CD4-positive, alpha-beta memory T cell (primary cell): ENCODE measurements at regions of chr9 and their contacts with region 1.

Region 1: GRCh38 chr9:70602321-70603019 is 188.0 kb upstream of the KLF9 start:
- DNase-seq: peak in 4 of 5 donors; percentile 43 to 60 (median 47)
- H3K4me3 ChIP-seq: no peak overlapping the region
- H3K4me3 Mint-ChIP-seq: no peak overlapping the region
- H3K27ac ChIP-seq: no peak overlapping the region
- H3K27ac Mint-ChIP-seq: peak overlapping the region in 1 of 7 donors; percentile 49
- H3K4me1 ChIP-seq: no peaks in the 10 kb centered on the region
- H3K4me1 Mint-ChIP-seq: no peaks in the 10 kb centered on the region
- H3K27me3 ChIP-seq: no peaks in the 10 kb centered on the region
- H3K27me3 Mint-ChIP-seq: peaks cover 0 to 1% of the 10 kb centered on the region in 2 donors

Region 2: GRCh38 chr9:69971643-69972449 is 630.6 kb before region 1 on chr9:
- CTCF ChIA-PET with region 1: interaction called, 33 read pairs
- POLR2A ChIA-PET with region 1: no interaction called
- intact Hi-C with region 1: no loop called
- DNase-seq: peak in 4 of 5 donors; percentile 20 to 30 (median 23)
- H3K4me3 ChIP-seq: no peak overlapping the region
- H3K4me3 Mint-ChIP-seq: no peak overlapping the region
- H3K27ac ChIP-seq: no peak overlapping the region
- H3K27ac Mint-ChIP-seq: peak overlapping the region in 1 of 7 donors; percentile 29
- H3K4me1 ChIP-seq: no peaks in the 10 kb centered on the region
- H3K4me1 Mint-ChIP-seq: peaks cover 0 to 4% (median 0%) of the 10 kb centered on the region in 4 donors
- H3K27me3 ChIP-seq: no peaks in the 10 kb centered on the region
- H3K27me3 Mint-ChIP-seq: peaks cover 4 to 11% of the 10 kb centered on the region in 2 donors

Region 3: GRCh38 chr9:70258692-70259511 is 343.6 kb before region 1 on chr9 and contains the start of gene SMC5:
- CTCF ChIA-PET with region 1: no interaction called
- POLR2A ChIA-PET with region 1: no interaction called
- intact Hi-C with region 1: loop called (anchors 10 kb)
- DNase-seq: peak; percentile 85 to 93 (median 92)
- H3K4me3 ChIP-seq: peak within 1 kb of the TSS; percentile 62 to 66
- H3K4me3 Mint-ChIP-seq: peak within 1 kb of the TSS; percentile 89 to 99 (median 96)
- H3K27ac ChIP-seq: peak within 1 kb of the TSS; percentile 95
- H3K27ac Mint-ChIP-seq: peak within 1 kb of the TSS; percentile 91 to 99 (median 97)
- H3K4me1 ChIP-seq: peaks cover 55% of the 10 kb centered on the region
- H3K4me1 Mint-ChIP-seq: peaks cover 44 to 65% (median 51%) of the 10 kb centered on the region in 4 donors
- H3K27me3 ChIP-seq: no peaks in the 10 kb centered on the region
- H3K27me3 Mint-ChIP-seq: no peaks in the 10 kb centered on the region
- total RNA-seq, gene SMC5: 43.7 to 48.3 TPM

Region 4: GRCh38 chr9:70352802-70353201 is 249.7 kb before region 1 on chr9:
- CTCF ChIA-PET with region 1: interaction called, 47 read pairs
- POLR2A ChIA-PET with region 1: interaction called, 5 read pairs
- intact Hi-C with region 1: loop called (anchors 1 kb)
- DNase-seq: peak in 4 of 5 donors; percentile 14 to 31 (median 24)
- H3K4me3 ChIP-seq: no peak overlapping the region
- H3K4me3 Mint-ChIP-seq: no peak overlapping the region
- H3K27ac ChIP-seq: no peak overlapping the region
- H3K27ac Mint-ChIP-seq: peak overlapping the region in 1 of 7 donors; percentile 11
- H3K4me1 ChIP-seq: no peaks in the 10 kb centered on the region
- H3K4me1 Mint-ChIP-seq: peaks cover 0 to 2% (median under 1%) of the 10 kb centered on the region in 4 donors
- H3K27me3 ChIP-seq: no peaks in the 10 kb centered on the region
- H3K27me3 Mint-ChIP-seq: no peaks in the 10 kb centered on the region

Region 5: DNA sequence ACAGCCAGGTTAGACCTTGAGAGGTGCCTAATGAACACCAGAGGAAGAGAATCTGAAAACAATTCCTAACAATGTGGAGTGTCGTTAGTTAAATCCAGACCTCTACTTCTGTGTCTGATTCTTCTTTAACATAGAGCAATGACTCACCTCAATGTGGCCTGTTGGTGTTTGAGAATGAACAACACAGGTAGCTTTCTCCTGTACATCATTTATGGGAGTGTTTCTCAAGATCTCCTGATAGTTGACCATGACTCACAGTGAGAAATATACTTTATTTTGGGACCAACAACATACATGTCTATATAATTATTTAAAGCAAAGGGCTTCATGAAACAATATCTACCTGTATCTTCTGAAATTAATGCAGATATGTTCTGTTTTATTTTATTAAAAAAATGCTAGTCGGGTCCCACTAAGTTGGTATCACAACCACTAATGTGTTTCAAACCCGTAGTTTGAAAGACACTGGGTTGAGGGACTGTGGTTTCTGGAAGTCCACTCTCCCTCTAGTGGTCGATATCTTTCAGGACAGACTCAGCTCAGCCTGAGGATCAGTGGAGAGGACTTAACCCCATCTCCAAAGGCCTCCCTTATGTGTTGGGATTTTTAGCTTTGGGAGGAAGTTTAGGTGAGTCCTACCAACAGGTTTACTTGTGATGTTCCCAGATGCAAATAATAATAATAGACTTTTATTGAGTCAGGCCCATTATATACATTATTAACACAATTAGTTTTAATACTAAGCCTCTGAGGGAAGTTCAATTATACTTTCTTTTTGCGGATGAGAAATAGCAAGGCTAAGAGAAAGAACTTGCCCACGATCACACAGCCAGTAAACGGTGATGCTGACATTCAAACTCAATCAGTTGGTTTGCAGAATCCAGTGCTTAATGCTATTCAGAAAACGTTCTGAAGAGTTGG is 118.0 kb before region 1 on chr9:
- CTCF ChIA-PET with region 1: interaction called, 18 read pairs
- POLR2A ChIA-PET with region 1: interaction called, 5 read pairs
- intact Hi-C with region 1: loop called (anchors 1 kb)
- DNase-seq: peak in 4 of 5 donors; percentile 32 to 48 (median 38)
- H3K4me3 ChIP-seq: no peak overlapping the region
- H3K4me3 Mint-ChIP-seq: no peak overlapping the region
- H3K27ac ChIP-seq: no peak overlapping the region
- H3K27ac Mint-ChIP-seq: peak overlapping the region in 2 of 7 donors; percentile 67 to 70
- H3K4me1 ChIP-seq: peaks cover 7% of the 10 kb centered on the region
- H3K4me1 Mint-ChIP-seq: peaks cover 0 to 7% (median 2%) of the 10 kb centered on the region in 4 donors
- H3K27me3 ChIP-seq: no peaks in the 10 kb centered on the region
- H3K27me3 Mint-ChIP-seq: peaks cover 0 to 3% of the 10 kb centered on the region in 2 donors